CD4-positive, alpha-beta memory T cell (primary cell): ENCODE measurements at regions of chr18 and their contacts with region 1.

Region 1: GRCh38 chr18:63299837-63300745 is 19.5 kb downstream of the BCL2 start:
- DNase-seq: peak in 2 of 5 donors; percentile 21 to 53
- H3K4me3 ChIP-seq: no peak overlapping the region
- H3K4me3 Mint-ChIP-seq: peak overlapping the region; percentile 20 to 87 (median 76)
- H3K27ac ChIP-seq: peak overlapping the region; percentile 22
- H3K27ac Mint-ChIP-seq: peak overlapping the region; percentile 87 to 96 (median 93)
- H3K4me1 ChIP-seq: peaks cover 90% of the 10 kb centered on the region
- H3K4me1 Mint-ChIP-seq: peaks cover 64 to 92% (median 73%) of the 10 kb centered on the region in 4 donors
- H3K27me3 ChIP-seq: no peaks in the 10 kb centered on the region
- H3K27me3 Mint-ChIP-seq: no peaks in the 10 kb centered on the region

Region 2: DNA sequence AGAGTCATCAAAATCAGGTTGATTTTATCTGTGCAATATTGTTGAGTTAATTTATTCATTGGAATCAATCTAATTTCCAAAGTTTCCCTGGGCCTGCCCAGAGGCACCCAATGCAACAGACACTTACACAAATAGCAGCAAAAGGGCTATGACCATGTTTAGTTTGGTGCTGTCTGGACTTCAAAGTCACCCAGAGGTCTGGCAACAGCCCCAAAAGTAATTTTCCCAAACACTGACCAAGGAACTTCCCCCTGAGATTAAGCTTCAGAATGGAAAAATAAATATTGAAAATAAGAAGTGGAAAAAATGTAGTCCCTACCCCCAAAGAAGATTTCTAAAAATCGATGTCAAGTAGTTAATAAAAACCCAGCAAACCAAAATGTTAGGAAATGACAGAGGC is 1336.4 kb before region 1 on chr18:
- CTCF ChIA-PET with region 1: no interaction called
- POLR2A ChIA-PET with region 1: no interaction called
- intact Hi-C with region 1: no loop called
- DNase-seq: no peak
- H3K4me3 ChIP-seq: no peak overlapping the region
- H3K4me3 Mint-ChIP-seq: no peak overlapping the region
- H3K27ac ChIP-seq: no peak overlapping the region
- H3K27ac Mint-ChIP-seq: no peak overlapping the region
- H3K4me1 ChIP-seq: no peaks in the 10 kb centered on the region
- H3K4me1 Mint-ChIP-seq: no peaks in the 10 kb centered on the region
- H3K27me3 ChIP-seq: no peaks in the 10 kb centered on the region
- H3K27me3 Mint-ChIP-seq: peaks cover 0 to 4% of the 10 kb centered on the region in 2 donors

Region 3: GRCh38 chr18:63207143-63207790 is 92.8 kb before region 1 on chr18:
- CTCF ChIA-PET with region 1: interaction called, 3 read pairs
- POLR2A ChIA-PET with region 1: interaction called, 12 read pairs
- intact Hi-C with region 1: no loop called
- DNase-seq: no peak
- H3K4me3 ChIP-seq: peak overlapping the region in 1 of 2 donors; percentile 7
- H3K4me3 Mint-ChIP-seq: peak overlapping the region; percentile 70 to 89 (median 84)
- H3K27ac ChIP-seq: peak overlapping the region; percentile 46
- H3K27ac Mint-ChIP-seq: peak overlapping the region; percentile 81 to 97 (median 89)
- H3K4me1 ChIP-seq: peaks cover 100% of the 10 kb centered on the region
- H3K4me1 Mint-ChIP-seq: peaks cover 79 to 97% (median 90%) of the 10 kb centered on the region in 4 donors
- H3K27me3 ChIP-seq: no peaks in the 10 kb centered on the region
- H3K27me3 Mint-ChIP-seq: no peaks in the 10 kb centered on the region

Region 4: DNA sequence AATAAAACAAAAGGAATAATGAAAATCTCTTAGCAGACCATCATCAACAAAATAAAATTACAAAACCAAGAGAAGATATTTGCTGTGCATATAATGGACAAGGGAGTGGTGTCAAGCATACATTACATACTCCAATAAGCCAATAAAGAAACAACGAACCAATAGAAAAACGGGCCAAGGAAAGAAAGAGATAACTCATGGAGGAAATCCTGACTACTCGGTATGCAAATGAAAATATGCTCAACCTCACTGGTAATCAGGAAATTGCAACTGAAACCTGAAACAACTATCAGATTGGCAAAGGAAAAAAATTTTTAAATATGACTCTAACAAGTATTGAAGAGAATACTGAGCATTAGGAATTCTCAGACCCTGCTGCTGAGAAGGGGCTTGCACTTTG is 65.2 kb before region 1 on chr18:
- CTCF ChIA-PET with region 1: no interaction called
- POLR2A ChIA-PET with region 1: interaction called, 15 read pairs
- intact Hi-C with region 1: no loop called
- DNase-seq: no peak
- H3K4me3 ChIP-seq: no peak overlapping the region
- H3K4me3 Mint-ChIP-seq: peak overlapping the region; percentile 16 to 80 (median 59)
- H3K27ac ChIP-seq: peak overlapping the region; percentile 21
- H3K27ac Mint-ChIP-seq: peak overlapping the region; percentile 53 to 92 (median 84)
- H3K4me1 ChIP-seq: peaks cover 49% of the 10 kb centered on the region
- H3K4me1 Mint-ChIP-seq: peaks cover 53 to 83% (median 67%) of the 10 kb centered on the region in 4 donors
- H3K27me3 ChIP-seq: no peaks in the 10 kb centered on the region
- H3K27me3 Mint-ChIP-seq: no peaks in the 10 kb centered on the region

Region 5: DNA sequence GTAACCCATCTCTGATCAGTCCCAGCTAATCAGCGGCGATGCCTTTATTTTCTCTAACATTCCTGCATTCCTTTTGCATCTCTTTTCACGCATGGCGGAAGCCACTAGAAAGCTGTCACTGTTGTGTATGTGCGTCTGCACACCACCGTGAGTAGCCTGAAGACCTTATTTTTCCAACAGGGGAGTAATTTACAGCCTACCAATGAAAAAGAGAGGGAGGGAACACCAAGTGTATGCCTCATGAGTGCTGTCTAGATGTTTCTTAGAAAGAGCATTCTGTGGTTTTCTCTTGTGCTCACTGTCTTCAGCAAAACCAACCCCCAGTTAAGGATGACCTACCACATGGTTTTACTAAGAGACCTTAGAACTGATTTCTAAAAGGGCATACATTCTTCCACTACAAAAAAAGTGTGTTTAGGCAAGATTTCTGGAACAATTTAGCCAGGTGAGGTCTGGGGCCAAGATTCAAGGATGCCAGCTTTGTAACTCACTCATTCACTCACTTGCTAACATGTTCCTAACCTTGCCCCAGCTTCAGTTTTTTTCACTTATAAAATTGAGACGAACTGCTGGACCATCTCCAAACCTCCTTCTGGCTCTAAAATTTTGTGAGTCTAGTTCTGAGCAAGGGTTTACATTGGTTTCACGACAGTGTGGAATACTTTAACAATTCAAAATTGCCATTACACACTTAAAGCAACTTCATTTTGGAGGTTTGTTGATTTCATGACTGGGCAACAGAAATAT is 31.9 kb before region 1 on chr18:
- CTCF ChIA-PET with region 1: no interaction called
- POLR2A ChIA-PET with region 1: interaction called, 12 read pairs
- intact Hi-C with region 1: no loop called
- DNase-seq: no peak
- H3K4me3 ChIP-seq: no peak overlapping the region
- H3K4me3 Mint-ChIP-seq: peak overlapping the region in 7 of 8 donors; percentile 8 to 75 (median 67)
- H3K27ac ChIP-seq: no peak overlapping the region
- H3K27ac Mint-ChIP-seq: peak overlapping the region; percentile 8 to 72 (median 50)
- H3K4me1 ChIP-seq: peaks cover 73% of the 10 kb centered on the region
- H3K4me1 Mint-ChIP-seq: peaks cover 48 to 88% (median 65%) of the 10 kb centered on the region in 4 donors
- H3K27me3 ChIP-seq: no peaks in the 10 kb centered on the region
- H3K27me3 Mint-ChIP-seq: no peaks in the 10 kb centered on the region

Region 6: DNA sequence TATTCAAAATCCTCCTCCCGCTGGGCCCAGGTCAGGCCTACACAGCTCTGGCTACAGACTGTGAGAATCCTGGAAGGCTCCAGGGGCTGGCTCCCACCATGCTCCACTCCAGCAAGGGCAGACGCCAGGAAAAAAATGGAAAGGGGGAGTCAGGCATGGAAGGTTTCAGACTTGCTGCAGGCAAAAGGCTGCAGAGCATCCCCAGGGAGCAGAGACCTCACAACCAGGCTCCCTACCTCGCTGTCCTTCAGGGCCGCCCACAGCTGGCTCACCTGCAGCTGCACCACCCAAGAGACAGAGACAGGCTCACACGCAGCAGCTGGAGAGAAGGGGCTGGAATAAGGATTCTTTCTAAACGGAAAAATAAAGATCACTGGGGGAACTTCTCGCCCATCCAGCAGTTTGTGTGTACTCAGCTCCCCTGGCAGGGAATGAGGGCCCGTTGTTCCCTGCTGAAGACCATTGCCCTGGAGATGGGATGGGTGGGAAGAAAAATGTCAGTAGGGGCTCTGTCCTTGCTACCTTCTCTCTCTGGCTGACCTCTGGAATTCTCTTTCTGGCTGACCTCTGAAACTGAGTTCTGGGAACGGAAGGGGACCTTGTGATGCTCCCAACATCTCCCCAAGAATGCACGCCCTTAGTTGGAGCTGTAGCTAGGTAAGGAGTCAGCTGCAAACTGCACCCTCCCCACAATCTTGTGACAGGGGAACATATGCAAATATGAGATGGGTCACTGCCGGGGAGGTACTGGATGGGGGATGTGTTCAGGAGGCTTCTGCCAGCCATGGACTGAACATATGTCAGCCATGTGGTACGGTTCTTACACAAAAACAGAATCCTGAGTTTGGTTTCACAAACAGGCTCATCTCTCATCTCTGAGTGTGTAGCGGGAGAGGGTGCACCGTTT is 15.0 kb before region 1 on chr18:
- CTCF ChIA-PET with region 1: interaction called, 4 read pairs
- POLR2A ChIA-PET with region 1: interaction called, 83 read pairs
- intact Hi-C with region 1: loop called (anchors 2 kb)
- DNase-seq: no peak
- H3K4me3 ChIP-seq: no peak overlapping the region
- H3K4me3 Mint-ChIP-seq: peak overlapping the region in 5 of 8 donors; percentile 10 to 73 (median 43)
- H3K27ac ChIP-seq: no peak overlapping the region
- H3K27ac Mint-ChIP-seq: peak overlapping the region in 4 of 7 donors; percentile 16 to 53 (median 30)
- H3K4me1 ChIP-seq: peaks cover 73% of the 10 kb centered on the region
- H3K4me1 Mint-ChIP-seq: peaks cover 20 to 45% (median 32%) of the 10 kb centered on the region in 4 donors
- H3K27me3 ChIP-seq: no peaks in the 10 kb centered on the region
- H3K27me3 Mint-ChIP-seq: no peaks in the 10 kb centered on the region

Region 7: GRCh38 chr18:63311118-63312018 is 11.3 kb after region 1 on chr18:
- CTCF ChIA-PET with region 1: interaction called, 16 read pairs
- POLR2A ChIA-PET with region 1: interaction called, 94 read pairs
- intact Hi-C with region 1: loop called (anchors 1 kb)
- DNase-seq: no peak
- H3K4me3 ChIP-seq: no peak overlapping the region
- H3K4me3 Mint-ChIP-seq: peak overlapping the region in 7 of 8 donors; percentile 26 to 92 (median 69)
- H3K27ac ChIP-seq: peak overlapping the region; percentile 14
- H3K27ac Mint-ChIP-seq: peak overlapping the region; percentile 51 to 94 (median 80)
- H3K4me1 ChIP-seq: peaks cover 96% of the 10 kb centered on the region
- H3K4me1 Mint-ChIP-seq: peaks cover 61 to 96% (median 82%) of the 10 kb centered on the region in 4 donors
- H3K27me3 ChIP-seq: no peaks in the 10 kb centered on the region
- H3K27me3 Mint-ChIP-seq: no peaks in the 10 kb centered on the region